ENCODE measurements at regions of chr22 and their contacts with region 1.

Region 1: DNA sequence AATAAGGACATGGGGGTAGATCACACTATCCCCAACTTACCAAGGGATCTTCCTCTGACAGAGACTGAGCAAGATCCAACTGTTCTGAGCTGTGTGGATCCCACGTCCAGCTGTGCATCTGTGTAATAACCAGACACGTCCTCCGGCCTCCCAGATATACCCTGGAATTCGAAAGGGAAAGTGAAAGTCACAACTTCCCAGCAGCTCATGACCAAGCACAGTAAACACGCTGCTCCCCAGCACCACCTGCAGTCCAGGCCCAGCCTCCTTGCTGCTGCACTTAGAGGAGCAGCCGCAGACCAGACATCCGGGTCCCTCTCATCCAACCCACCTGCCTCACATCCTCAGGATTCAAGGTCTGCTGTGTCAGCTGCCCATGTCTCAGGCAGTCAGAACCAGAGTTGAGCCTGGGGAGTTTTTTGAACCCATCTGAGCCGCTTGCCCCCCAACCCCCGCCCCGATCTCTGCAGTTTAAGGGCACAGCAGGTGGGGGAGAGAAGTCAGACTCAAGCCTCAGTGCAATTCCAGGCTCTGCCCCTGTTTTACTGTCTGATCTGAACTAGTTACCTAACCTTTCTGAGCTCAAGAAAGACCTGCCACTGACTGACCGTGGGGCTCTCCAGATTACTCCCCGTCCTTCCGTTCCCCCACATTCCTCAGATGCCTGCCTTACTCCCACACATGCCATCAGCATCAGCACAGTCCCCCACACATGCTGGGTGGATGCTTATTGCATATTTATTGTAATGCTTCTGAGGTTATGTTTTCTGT is at the start of gene APOL2:
- DNase-seq: peak; percentile 67
- H3K4me3 ChIP-seq: peak within 1 kb of the TSS; percentile 75
- CTCF ChIP-seq: peak; percentile 83

Region 2: GRCh38 chr22:35766654-35767580 is 472.7 kb before region 1 on chr22:
- CTCF ChIA-PET with region 1: no interaction called
- POLR2A ChIA-PET with region 1: no interaction called
- DNase-seq: no peak
- H3K4me3 ChIP-seq: no peak overlapping the region
- CTCF ChIP-seq: no peak

Region 3: GRCh38 chr22:36194971-36195370 is 44.6 kb before region 1 on chr22:
- CTCF ChIA-PET with region 1: interaction called, 47 read pairs
- POLR2A ChIA-PET with region 1: no interaction called
- DNase-seq: no peak
- H3K4me3 ChIP-seq: no peak overlapping the region
- CTCF ChIP-seq: peak; percentile 65

Region 4: GRCh38 chr22:36215981-36216380 is 23.6 kb before region 1 on chr22:
- CTCF ChIA-PET with region 1: interaction called, 17 read pairs
- POLR2A ChIA-PET with region 1: no interaction called
- DNase-seq: no peak
- H3K4me3 ChIP-seq: no peak overlapping the region
- CTCF ChIP-seq: no peak

Region 5: GRCh38 chr22:36252754-36253517 is 13.3 kb after region 1 on chr22 and contains the start of gene APOL1:
- CTCF ChIA-PET with region 1: interaction called, 22 read pairs
- POLR2A ChIA-PET with region 1: interaction called, 6 read pairs
- DNase-seq: no peak
- H3K4me3 ChIP-seq: no peak within 1 kb of the TSS
- CTCF ChIP-seq: no peak

Region 6: GRCh38 chr22:36887162-36887561 is 647.6 kb after region 1 on chr22:
- CTCF ChIA-PET with region 1: no interaction called
- POLR2A ChIA-PET with region 1: no interaction called
- DNase-seq: no peak
- H3K4me3 ChIP-seq: no peak overlapping the region
- CTCF ChIP-seq: no peak

Measured in AG04449 (cell line).